Ovary (tissue), 10 donors: ENCODE measurements at regions of chr4 and their contacts with region 1.

Region 1: DNA sequence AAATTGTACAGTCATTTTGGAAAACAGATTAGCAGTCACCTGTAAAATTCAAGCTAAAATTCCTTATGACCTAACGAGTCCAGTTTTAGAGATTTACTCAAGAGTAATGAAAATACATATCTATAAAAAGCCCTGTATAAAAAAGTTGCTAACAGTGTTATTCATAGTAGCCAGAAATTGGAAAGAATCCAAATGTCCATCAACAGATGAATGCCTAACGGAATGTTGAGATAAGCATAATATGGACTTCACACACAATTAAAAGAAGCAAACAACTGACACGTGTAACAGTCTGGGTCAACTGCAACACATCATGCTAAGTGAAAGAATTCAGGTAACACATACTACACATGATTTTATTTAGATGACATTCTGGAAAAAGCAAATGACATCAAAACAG is 584.8 kb upstream of the AGA start:
- DNase-seq: no peak
- H3K4me3 ChIP-seq: no peak overlapping the region
- H3K27ac ChIP-seq: no peak overlapping the region
- H3K4me1 ChIP-seq: no peaks in the 10 kb centered on the region
- H3K27me3 ChIP-seq: no peaks in the 10 kb centered on the region
- CTCF ChIP-seq: no peak
- EP300 ChIP-seq: no peak
- POLR2A ChIP-seq: no peak

Region 2: DNA sequence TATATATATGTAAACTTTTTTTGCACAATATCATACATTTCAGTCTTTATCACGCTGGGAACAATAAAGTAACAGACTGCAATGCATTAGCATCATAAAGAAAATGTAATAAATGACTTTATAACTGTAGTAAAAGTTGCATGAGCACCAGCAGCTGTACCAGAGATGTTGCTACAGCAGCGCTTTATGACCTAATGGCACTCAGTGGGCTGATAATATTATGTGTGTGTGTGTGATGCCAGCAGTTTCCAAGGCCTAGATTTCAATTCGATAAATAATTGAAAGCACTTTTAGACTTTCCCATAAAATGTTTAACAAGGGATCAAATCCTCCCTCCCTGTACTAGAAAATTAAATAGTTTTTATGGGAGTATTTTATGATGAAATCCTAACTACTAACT is 217.2 kb before region 1 on chr4:
- intact Hi-C with region 1: loop called in 1 of 4 experiments (anchors 5 kb)
- DNase-seq: no peak
- H3K4me3 ChIP-seq: no peak overlapping the region
- H3K27ac ChIP-seq: no peak overlapping the region
- H3K4me1 ChIP-seq: no peaks in the 10 kb centered on the region
- H3K27me3 ChIP-seq: no peaks in the 10 kb centered on the region
- CTCF ChIP-seq: no peak
- EP300 ChIP-seq: no peak
- POLR2A ChIP-seq: no peak

Region 3: GRCh38 chr4:178056996-178057395 is 30.0 kb after region 1 on chr4:
- intact Hi-C with region 1: loop called in 1 of 4 experiments (anchors 1 kb)
- DNase-seq: no peak
- H3K4me3 ChIP-seq: no peak overlapping the region
- H3K27ac ChIP-seq: no peak overlapping the region
- H3K4me1 ChIP-seq: no peaks in the 10 kb centered on the region
- H3K27me3 ChIP-seq: no peaks in the 10 kb centered on the region
- CTCF ChIP-seq: no peak
- EP300 ChIP-seq: no peak
- POLR2A ChIP-seq: no peak